ENCODE measurements at regions of chr10 and their contacts with region 1.

Region 1: GRCh38 chr10:72048450-72049124 is 39.8 kb downstream of the SPOCK2 start:
- DNase-seq: peak; percentile 93
- ATAC-seq: peak; percentile 97
- H3K4me3 Mint-ChIP-seq: no peak overlapping the region
- H3K27ac Mint-ChIP-seq: peak overlapping the region; percentile 60
- H3K4me1 Mint-ChIP-seq: peaks cover 14% of the 10 kb centered on the region
- H3K27me3 Mint-ChIP-seq: no peaks in the 10 kb centered on the region

Region 2: DNA sequence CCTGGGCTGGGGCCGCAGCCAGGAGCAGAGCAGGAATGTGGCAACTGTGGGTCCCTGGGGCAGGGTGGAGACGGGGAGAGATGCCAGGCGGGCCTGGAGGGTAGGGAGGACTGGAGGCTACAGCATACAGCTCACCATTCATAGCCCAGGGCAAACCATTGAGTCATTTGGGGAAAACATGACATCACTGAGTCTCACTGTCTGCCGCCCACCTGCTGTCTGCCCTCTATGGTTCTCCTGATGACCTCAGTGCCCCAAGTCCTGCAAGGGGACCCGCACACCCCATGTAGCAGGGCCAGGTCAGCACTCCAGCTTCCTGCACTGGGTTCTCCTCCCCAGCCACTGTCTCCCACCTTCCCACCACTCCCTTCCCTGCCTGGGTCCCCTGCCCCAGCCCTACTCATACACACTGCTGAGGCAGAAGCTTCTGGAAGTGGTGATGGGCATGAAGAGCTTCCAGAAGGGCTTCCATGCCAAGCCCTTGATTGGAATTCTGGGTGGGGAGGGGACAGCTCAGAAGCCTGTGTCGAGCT is 74.0 kb before region 1 on chr10:
- CTCF ChIA-PET with region 1: interaction called, 12 read pairs
- POLR2A ChIA-PET with region 1: no interaction called
- DNase-seq: no peak
- ATAC-seq: no peak
- H3K4me3 Mint-ChIP-seq: no peak overlapping the region
- H3K27ac Mint-ChIP-seq: no peak overlapping the region
- H3K4me1 Mint-ChIP-seq: peaks cover 6% of the 10 kb centered on the region
- H3K27me3 Mint-ChIP-seq: no peaks in the 10 kb centered on the region

Region 3: DNA sequence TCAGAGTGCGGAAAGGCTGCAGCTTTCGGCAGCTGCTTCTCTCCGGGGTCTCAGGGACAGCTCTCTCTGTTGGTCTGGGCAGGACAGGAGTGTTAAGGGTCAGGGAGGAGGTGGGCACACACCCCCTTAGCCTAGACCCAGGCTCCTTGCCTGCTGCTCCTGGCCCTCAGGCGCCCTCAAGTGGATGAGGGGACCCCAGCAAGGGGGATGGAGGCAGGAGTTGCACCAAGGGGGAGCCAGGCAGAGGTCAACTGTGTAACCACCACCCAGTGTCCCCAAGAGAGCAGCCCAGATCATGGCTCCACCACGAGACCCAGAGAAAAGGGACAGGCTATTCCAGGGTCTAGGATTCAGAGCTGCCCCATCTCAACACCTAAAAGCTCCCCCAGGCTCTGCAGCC is 12.9 kb after region 1 on chr10:
- CTCF ChIA-PET with region 1: interaction called, 50 read pairs
- POLR2A ChIA-PET with region 1: interaction called, 4 read pairs
- DNase-seq: no peak
- ATAC-seq: peak; percentile 32
- H3K4me3 Mint-ChIP-seq: no peak overlapping the region
- H3K27ac Mint-ChIP-seq: no peak overlapping the region
- H3K4me1 Mint-ChIP-seq: no peaks in the 10 kb centered on the region
- H3K27me3 Mint-ChIP-seq: no peaks in the 10 kb centered on the region

Region 4: GRCh38 chr10:72088889-72089575 is 40.4 kb after region 1 on chr10:
- CTCF ChIA-PET with region 1: interaction called, 13 read pairs
- POLR2A ChIA-PET with region 1: no interaction called
- DNase-seq: peak; percentile 73
- ATAC-seq: peak; percentile 54
- H3K4me3 Mint-ChIP-seq: peak overlapping the region; percentile 97
- H3K27ac Mint-ChIP-seq: peak overlapping the region; percentile 99
- H3K4me1 Mint-ChIP-seq: peaks cover 56% of the 10 kb centered on the region
- H3K27me3 Mint-ChIP-seq: no peaks in the 10 kb centered on the region

Region 5: GRCh38 chr10:72126184-72126871 is 77.7 kb after region 1 on chr10:
- CTCF ChIA-PET with region 1: interaction called, 24 read pairs
- POLR2A ChIA-PET with region 1: no interaction called
- DNase-seq: no peak
- ATAC-seq: no peak
- H3K4me3 Mint-ChIP-seq: no peak overlapping the region
- H3K27ac Mint-ChIP-seq: no peak overlapping the region
- H3K4me1 Mint-ChIP-seq: peaks cover 25% of the 10 kb centered on the region
- H3K27me3 Mint-ChIP-seq: no peaks in the 10 kb centered on the region

Region 6: GRCh38 chr10:72223743-72224101 is 175.1 kb after region 1 on chr10:
- CTCF ChIA-PET with region 1: interaction called, 21 read pairs
- POLR2A ChIA-PET with region 1: interaction called, 3 read pairs
- DNase-seq: no peak
- ATAC-seq: peak; percentile 22
- H3K4me3 Mint-ChIP-seq: peak overlapping the region; percentile 24
- H3K27ac Mint-ChIP-seq: peak overlapping the region; percentile 65
- H3K4me1 Mint-ChIP-seq: peaks cover 51% of the 10 kb centered on the region
- H3K27me3 Mint-ChIP-seq: no peaks in the 10 kb centered on the region

Region 7: GRCh38 chr10:72419241-72419640 is 370.7 kb after region 1 on chr10:
- CTCF ChIA-PET with region 1: no interaction called
- POLR2A ChIA-PET with region 1: no interaction called
- DNase-seq: no peak
- ATAC-seq: no peak
- H3K4me3 Mint-ChIP-seq: no peak overlapping the region
- H3K27ac Mint-ChIP-seq: no peak overlapping the region
- H3K4me1 Mint-ChIP-seq: no peaks in the 10 kb centered on the region
- H3K27me3 Mint-ChIP-seq: no peaks in the 10 kb centered on the region

Measured in activated CD8-positive, alpha-beta T cell treated with anti-CD3 and anti-CD28 coated beads, Interleukin-2, amount 10 ng/mL, durations not matched to agents 7 days and 5 days (primary cell).